Right cardiac atrium (tissue), 5 donors: ENCODE measurements at regions of chr9 and their contacts with region 1.

Region 1: DNA sequence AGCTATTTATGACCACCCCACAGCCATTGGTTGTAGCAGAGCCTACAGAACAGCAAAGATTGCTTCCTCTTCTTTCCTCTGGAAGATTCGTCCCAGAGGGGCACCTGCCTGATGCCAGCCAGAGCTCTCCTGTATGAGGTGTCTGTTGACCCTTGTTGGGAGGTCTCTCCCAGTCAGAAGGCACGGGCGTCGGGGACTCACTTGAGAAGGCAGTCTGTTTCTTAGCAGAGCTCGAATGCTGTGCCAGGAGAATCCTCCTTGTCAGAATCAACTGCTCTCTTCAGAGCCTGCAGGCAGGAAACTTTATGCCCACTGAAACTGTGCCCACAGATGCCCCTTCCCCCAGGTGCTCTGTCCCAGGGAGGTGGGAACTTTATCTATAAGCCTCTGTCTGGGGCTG is 479.5 kb upstream of the IZUMO3 start:
- DNase-seq: peak in 1 of 3 donors; percentile 26
- ATAC-seq: no peak
- H3K4me3 ChIP-seq: no peak overlapping the region
- H3K27ac ChIP-seq: no peak overlapping the region
- H3K4me1 ChIP-seq: no peaks in the 10 kb centered on the region
- H3K27me3 ChIP-seq: no peaks in the 10 kb centered on the region

Region 2: DNA sequence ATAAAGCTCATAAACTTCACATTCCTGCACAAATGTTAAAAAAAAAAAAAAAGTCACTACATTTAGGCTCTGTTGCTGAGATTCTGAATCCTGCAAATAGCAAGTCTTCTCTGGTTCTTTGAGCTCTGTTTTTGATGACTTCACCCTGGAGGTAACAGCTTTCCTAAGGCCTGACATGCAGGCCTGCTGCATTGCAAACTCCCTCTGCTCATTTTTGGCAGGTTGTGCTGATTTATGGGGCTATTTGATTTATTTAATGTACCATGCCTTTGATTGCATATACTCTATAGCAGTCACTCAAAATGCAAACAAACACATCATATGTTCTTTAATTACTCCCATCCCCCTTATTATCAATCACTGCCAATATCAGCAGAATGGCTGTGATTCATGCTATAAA is 63.4 kb before region 1 on chr9:
- intact Hi-C with region 1: loop called in 1 of 4 experiments (anchors 10 kb)
- DNase-seq: no peak
- ATAC-seq: no peak
- H3K4me3 ChIP-seq: no peak overlapping the region
- H3K27ac ChIP-seq: no peak overlapping the region
- H3K4me1 ChIP-seq: no peaks in the 10 kb centered on the region
- H3K27me3 ChIP-seq: no peaks in the 10 kb centered on the region

Region 3: DNA sequence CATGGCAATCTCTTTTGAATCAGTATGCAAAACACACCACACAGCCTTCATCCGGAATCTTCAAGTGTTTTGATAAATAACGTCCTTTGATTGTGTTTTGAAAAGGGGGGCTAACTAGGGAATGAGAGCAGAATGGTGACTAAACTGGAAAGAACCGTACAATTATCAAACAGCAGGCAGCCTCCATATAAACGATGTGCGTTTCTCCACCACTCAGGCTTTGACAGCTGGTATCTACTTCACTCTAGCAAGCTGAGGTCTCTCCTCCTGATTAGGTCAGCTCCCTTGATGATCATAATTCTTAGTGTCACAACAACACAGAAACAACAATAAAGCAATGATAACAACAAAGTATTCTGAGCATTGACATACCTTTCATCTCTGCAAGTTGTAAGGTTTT is 187.2 kb after region 1 on chr9:
- intact Hi-C with region 1: no loop called
- DNase-seq: no peak
- ATAC-seq: no peak
- H3K4me3 ChIP-seq: no peak overlapping the region
- H3K27ac ChIP-seq: no peak overlapping the region
- H3K4me1 ChIP-seq: no peaks in the 10 kb centered on the region
- H3K27me3 ChIP-seq: no peaks in the 10 kb centered on the region